ENCODE measurements at regions of chr7 and their contacts with region 1.

Region 1: GRCh38 chr7:105149827-105150226 is 135.8 kb downstream of the KMT2E start:
- DNase-seq: peak; percentile 86
- ATAC-seq: peak; percentile 93
- H3K4me3 ChIP-seq: no peak overlapping the region
- H3K27ac ChIP-seq: peak overlapping the region; percentile 64
- H3K4me1 ChIP-seq: peaks cover 14% of the 10 kb centered on the region
- H3K27me3 ChIP-seq: no peaks in the 10 kb centered on the region
- CTCF ChIP-seq: no peak

Region 2: DNA sequence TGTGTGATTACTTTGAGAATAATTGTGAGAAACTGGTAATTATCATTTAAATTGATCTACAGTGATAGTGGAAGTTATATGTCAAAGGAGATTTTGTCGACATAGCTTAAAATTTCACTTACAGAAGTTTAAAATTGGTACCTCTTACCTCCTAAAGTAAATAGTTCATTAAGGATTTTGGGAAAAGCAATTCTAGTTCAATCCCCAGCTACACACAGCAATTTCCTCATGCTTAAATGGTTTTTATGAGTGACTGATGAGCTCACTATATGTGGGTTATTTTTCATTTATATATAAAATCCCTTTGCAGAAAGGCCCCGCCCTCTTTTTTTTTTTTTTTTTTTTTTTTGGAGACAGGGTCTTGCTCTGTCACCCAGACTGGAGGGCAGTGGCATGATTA is 123.1 kb before region 1 on chr7:
- CTCF ChIA-PET with region 1: no interaction called
- POLR2A ChIA-PET with region 1: interaction called, 13 read pairs
- intact Hi-C with region 1: no loop called
- DNase-seq: peak; percentile 36
- ATAC-seq: 0 out of 2 replicates have a peak, but pooled peaks have one; percentile 27
- H3K4me3 ChIP-seq: no peak overlapping the region
- H3K27ac ChIP-seq: no peak overlapping the region
- H3K4me1 ChIP-seq: peaks cover 34% of the 10 kb centered on the region
- H3K27me3 ChIP-seq: no peaks in the 10 kb centered on the region
- CTCF ChIP-seq: no peak

Region 3: DNA sequence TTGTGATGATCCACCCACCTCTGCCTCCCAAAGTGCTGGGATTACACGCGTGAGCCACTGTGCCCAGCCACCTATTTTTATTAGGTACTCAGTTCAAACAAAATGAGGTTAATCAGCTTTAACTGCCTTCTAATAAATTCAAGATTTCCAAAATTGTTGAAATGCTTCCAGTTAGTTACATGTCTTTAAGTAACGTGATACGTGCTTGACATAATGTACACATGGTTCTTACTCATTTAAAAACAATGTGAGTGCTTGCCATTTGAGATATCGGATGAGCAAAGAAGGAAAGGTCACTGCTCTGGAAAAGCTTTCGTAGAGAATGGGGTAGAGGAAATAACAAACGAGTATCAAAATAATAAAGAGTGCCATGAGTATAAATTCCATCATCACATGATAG is 52.2 kb before region 1 on chr7:
- CTCF ChIA-PET with region 1: no interaction called
- POLR2A ChIA-PET with region 1: no interaction called
- intact Hi-C with region 1: no loop called
- DNase-seq: peak; percentile 89
- ATAC-seq: peak; percentile 80
- H3K4me3 ChIP-seq: no peak overlapping the region
- H3K27ac ChIP-seq: peak overlapping the region; percentile 53
- H3K4me1 ChIP-seq: peaks cover 52% of the 10 kb centered on the region
- H3K27me3 ChIP-seq: no peaks in the 10 kb centered on the region
- CTCF ChIP-seq: no peak

Region 4: DNA sequence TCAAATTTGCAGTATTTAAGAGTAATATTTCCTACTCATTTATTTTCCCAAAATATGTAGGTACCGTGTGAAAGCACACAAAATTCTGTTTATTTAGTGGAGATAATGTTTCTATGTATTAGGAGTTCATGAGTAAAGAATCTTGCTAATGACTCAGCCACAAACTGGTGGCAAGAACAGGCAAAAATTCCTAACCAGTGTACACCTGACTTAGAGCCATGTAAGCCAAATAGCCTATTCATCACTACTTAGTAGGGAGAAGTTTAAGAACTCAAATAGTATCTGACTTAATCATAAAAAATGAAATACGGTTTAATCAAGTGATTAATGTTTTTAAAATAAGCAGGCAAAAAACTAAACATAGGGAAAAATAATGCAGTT is 69.9 kb after region 1 on chr7:
- CTCF ChIA-PET with region 1: no interaction called
- POLR2A ChIA-PET with region 1: no interaction called
- intact Hi-C with region 1: loop called (anchors 5 kb)
- DNase-seq: peak; percentile 93
- ATAC-seq: peak; percentile 84
- H3K4me3 ChIP-seq: peak overlapping the region; percentile 1; the same call in 1 of the 2 replicates
- H3K27ac ChIP-seq: peak overlapping the region; percentile 91
- H3K4me1 ChIP-seq: peaks cover 52% of the 10 kb centered on the region
- H3K27me3 ChIP-seq: no peaks in the 10 kb centered on the region
- CTCF ChIP-seq: no peak

Measured in PC-3 (cell line).